Posterior vena cava (tissue), 2 donors: ENCODE measurements at regions of chr13 and their contacts with region 1.

Region 1: DNA sequence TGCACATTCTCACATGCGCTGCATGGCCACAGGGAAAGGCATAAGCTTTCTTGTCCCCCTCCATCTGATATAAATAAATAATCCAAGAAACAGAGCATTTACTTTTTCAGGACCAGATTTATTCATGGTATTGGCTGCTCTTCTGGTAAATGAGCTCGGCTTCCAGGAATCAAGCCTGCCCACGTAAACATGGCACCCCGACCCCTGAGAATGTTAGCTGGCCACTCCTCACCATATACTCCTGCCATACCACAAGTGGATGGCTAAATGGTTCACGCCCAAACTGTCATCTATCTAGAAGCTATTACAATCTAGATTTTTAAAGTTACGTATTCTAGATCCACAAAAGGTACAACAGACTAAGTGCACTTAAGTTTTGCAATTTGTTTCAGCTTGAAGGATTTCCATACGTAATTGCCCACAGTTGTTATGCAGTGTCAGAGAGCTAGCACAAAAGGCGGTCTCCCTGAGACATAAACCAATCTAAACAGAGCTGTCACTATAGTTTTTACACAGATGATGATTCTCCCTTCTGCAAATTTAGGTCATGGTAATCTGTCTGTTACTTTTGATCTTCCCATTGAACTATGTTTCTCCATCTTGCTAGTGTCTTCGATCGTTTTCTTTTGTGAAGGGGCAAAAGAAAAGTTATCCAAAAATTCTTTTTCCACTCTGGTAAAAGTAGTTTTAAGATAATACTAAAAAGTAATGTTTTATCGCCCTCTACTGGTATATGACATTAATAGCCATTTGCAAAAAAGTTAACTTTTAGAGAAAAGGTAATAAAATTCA is 16.2 kb upstream of the FOXO1 start:
- DNase-seq: no peak

Region 2: DNA sequence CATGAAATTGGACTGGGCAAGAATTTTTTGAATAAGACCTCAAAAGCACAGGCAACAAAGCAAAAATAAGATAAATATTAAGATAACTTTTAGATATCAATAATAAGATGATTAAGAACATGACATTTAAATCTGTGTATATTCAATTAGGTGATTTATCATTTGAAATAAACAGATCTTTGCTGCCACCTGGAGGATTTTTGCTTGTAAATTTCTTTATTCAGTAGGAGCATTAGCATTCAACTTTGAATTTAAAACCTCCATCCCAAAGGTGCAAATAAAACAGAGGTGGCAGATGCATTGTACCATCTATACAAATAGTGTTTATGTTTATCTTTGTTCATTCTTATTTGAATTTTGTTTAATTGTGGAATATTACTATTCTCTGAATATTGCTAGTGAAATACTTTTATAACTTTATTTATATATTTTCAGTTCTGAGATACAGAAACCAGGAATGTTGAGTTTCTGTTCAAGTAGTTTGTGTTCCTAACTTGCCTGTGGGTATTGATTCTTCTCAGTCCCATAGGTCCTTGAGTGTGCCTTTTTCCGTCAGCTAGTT is 1006.2 kb before region 1 on chr13:
- intact Hi-C with region 1: loop called (anchors 10 kb)
- DNase-seq: no peak

Region 3: GRCh38 chr13:39684531-39685137 is 998.0 kb before region 1 on chr13:
- intact Hi-C with region 1: loop called (anchors 10 kb)
- DNase-seq: no peak

Region 4: DNA sequence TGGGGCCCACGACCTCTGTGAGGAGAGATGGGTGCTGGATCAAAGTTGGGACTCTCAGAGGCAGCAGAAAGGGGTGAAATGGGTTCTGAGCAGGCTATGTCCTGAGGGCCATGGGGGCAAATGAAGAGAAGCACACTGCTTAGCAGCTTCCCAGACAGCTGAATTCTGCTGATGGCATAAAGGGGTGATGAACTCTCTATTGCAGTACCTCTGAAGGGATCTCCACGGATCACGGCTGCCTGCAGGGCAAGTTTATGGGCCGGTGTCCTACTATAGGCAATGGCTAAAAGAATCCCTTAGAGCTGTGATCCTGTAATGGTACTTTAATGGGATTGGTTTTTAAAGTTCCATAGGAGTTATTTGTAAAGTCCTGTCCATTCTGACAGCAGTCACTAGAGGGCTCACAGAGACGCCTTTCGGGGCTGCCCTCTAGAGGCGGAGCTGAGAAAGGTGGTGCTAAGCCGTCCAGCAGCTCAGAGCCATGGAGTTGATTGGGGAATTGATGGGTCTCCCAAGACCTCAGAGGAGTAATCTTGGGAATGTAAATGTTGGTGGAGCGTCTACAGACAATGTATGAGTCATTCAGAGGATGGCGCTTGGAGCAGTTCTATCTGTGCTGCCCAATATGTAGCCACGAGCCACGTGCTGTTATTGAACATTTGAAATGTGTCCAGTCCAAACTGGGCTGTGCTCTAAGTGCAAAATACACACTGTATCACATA is 739.9 kb before region 1 on chr13:
- intact Hi-C with region 1: loop called (anchors 10 kb)
- DNase-seq: peak; percentile 86